ENCODE measurements at regions of chr20 and their contacts with region 1.

Region 1: DNA sequence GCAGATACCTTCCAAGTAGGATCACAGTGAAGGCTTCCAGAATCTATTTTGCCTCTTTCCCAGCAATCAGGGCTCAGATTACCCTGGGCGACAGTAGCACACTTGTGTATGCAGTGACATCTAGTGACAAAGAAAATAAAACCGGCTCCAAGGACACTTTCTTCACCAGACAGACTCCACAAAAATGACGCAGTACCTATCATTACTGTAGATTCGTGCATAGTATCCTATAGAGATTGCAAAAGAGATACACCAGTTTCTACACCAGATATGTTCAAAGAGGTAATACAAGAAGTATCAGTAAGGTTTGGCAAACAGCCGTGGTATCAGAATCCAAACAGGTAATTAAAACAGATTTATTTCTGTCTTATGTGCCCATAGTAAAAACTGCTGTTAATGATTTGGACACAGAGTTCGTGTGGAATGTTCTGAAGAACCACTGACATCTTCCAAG is 600.4 kb upstream of the JAG1 start:
- DNase-seq: no peak
- H3K4me3 ChIP-seq: no peak overlapping the region
- H3K27ac ChIP-seq: no peak overlapping the region
- H3K4me1 ChIP-seq: no peaks in the 10 kb centered on the region
- H3K27me3 ChIP-seq: peaks cover 0 to 3% (median 0%) of the 10 kb centered on the region in 3 donors
- CTCF ChIP-seq: peak in 3 of 4 experiments; percentile 9 to 28 (median 15)
- EP300 ChIP-seq: no peak
- POLR2A ChIP-seq: no peak

Region 2: GRCh38 chr20:10469599-10469998 is 804.6 kb before region 1 on chr20:
- intact Hi-C with region 1: loop called (anchors 10 kb)
- DNase-seq: peak; percentile 88
- H3K4me3 ChIP-seq: no peak overlapping the region
- H3K27ac ChIP-seq: peak overlapping the region in 3 of 4 donors; percentile 27 to 52 (median 51)
- H3K4me1 ChIP-seq: peaks cover 0 to 49% (median 32%) of the 10 kb centered on the region in 4 donors
- H3K27me3 ChIP-seq: no peaks in the 10 kb centered on the region
- CTCF ChIP-seq: peak; percentile 54 to 70 (median 56)
- EP300 ChIP-seq: no peak
- POLR2A ChIP-seq: no peak

Region 3: DNA sequence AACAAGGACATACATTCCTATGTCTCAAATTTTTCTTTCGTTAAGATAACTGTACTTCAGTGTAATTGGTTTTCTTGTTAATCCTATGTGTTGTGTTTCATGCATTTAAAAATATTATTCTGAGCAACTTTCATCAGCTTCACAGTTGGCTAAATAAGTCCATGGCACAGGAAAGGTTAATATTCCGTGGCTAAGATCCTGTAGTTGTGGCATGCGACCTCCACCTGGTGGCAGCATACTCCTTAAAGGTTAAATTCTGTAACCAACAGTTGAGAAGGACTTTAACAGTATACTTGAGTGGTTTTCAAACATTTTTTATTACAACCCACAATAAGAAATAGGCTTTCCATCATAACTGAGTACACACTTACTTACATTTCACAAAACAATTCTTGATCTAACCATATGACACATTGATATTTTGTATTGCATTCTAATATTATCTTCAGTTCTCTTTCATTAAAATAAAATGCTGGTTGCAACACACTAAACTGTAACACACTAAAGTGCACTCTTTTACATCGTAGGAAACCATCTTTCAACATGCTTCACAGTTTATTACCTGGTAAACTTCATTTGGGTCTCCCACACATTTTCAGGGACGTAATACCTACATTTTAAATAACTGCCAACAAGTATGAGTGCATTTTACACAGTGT is 720.7 kb before region 1 on chr20:
- intact Hi-C with region 1: loop called (anchors 2 kb)
- DNase-seq: peak; percentile 79
- H3K4me3 ChIP-seq: no peak overlapping the region
- H3K27ac ChIP-seq: no peak overlapping the region
- H3K4me1 ChIP-seq: peaks cover 0 to 29% (median 15%) of the 10 kb centered on the region in 4 donors
- H3K27me3 ChIP-seq: no peaks in the 10 kb centered on the region
- CTCF ChIP-seq: peak; percentile 55 to 71 (median 66)
- EP300 ChIP-seq: no peak
- POLR2A ChIP-seq: no peak

Region 4: GRCh38 chr20:10798811-10799210 is 475.4 kb before region 1 on chr20:
- intact Hi-C with region 1: no loop called
- DNase-seq: no peak
- H3K4me3 ChIP-seq: no peak overlapping the region
- H3K27ac ChIP-seq: no peak overlapping the region
- H3K4me1 ChIP-seq: no peaks in the 10 kb centered on the region
- H3K27me3 ChIP-seq: no peaks in the 10 kb centered on the region
- CTCF ChIP-seq: no peak
- EP300 ChIP-seq: no peak
- POLR2A ChIP-seq: no peak